ENCODE measurements at regions of chr22 and their contacts with region 1.

Region 1: GRCh38 chr22:40922484-40923303 is 28.5 kb upstream of the RBX1 start:
- DNase-seq: peak in 1 of 2 donors; percentile 32
- ATAC-seq: peak in 7 of 8 donors; percentile 41 to 84 (median 70)
- H3K4me3 ChIP-seq: peak overlapping the region in 1 of 10 donors; percentile 11
- H3K27ac ChIP-seq: no peak overlapping the region
- H3K4me1 ChIP-seq: peaks cover 0 to 6% (median 0%) of the 10 kb centered on the region in 9 donors
- H3K27me3 ChIP-seq: no peaks in the 10 kb centered on the region
- CTCF ChIP-seq: peak; percentile 63 to 85 (median 79)

Region 2: GRCh38 chr22:41117127-41117965 is 194.7 kb after region 1 on chr22:
- intact Hi-C with region 1: loop called in 2 of 10 experiments (anchors 10 kb)
- DNase-seq: no peak
- ATAC-seq: peak in 1 of 8 donors; percentile 24
- H3K4me3 ChIP-seq: no peak overlapping the region
- H3K27ac ChIP-seq: no peak overlapping the region
- H3K4me1 ChIP-seq: peaks cover 0 to 40% (median 11%) of the 10 kb centered on the region in 9 donors
- H3K27me3 ChIP-seq: no peaks in the 10 kb centered on the region
- CTCF ChIP-seq: no peak

Region 3: GRCh38 chr22:41140365-41140957 is 217.8 kb after region 1 on chr22:
- intact Hi-C with region 1: loop called in 3 of 10 experiments (anchors 5 to 10 kb)
- DNase-seq: peak in 1 of 2 donors; percentile 13
- ATAC-seq: peak in 5 of 8 donors; percentile 29 to 67 (median 61)
- H3K4me3 ChIP-seq: no peak overlapping the region
- H3K27ac ChIP-seq: peak overlapping the region in 2 of 10 donors; percentile 7 to 23
- H3K4me1 ChIP-seq: peaks cover 0 to 19% (median 12%) of the 10 kb centered on the region in 9 donors
- H3K27me3 ChIP-seq: no peaks in the 10 kb centered on the region
- CTCF ChIP-seq: no peak

Region 4: GRCh38 chr22:41152902-41153301 is 230.2 kb after region 1 on chr22:
- intact Hi-C with region 1: loop called in 5 of 10 experiments (anchors 5 to 10 kb)
- DNase-seq: no peak
- ATAC-seq: no peak
- H3K4me3 ChIP-seq: no peak overlapping the region
- H3K27ac ChIP-seq: no peak overlapping the region
- H3K4me1 ChIP-seq: peaks cover 0 to 10% (median 0%) of the 10 kb centered on the region in 9 donors
- H3K27me3 ChIP-seq: no peaks in the 10 kb centered on the region
- CTCF ChIP-seq: no peak

Region 5: DNA sequence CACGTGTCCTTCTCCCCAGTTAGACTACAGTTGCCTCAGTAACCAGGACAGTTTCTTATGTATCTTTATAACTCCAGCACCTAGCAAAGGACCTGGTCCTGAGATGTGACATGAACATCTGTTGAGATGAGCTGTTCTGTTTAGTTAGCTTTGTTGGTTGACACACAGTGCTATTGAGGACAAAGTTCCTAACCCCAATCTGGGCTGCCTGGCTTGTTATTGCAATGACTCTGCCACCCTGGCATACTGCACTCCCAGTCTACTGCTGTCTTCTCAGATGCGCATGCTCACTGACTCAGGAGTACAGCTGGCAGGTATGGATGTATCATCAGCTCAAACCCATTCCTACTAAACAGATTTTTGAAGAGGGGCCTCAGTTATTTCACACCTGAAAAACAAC is 690.8 kb after region 1 on chr22:
- intact Hi-C with region 1: loop called in 1 of 10 experiments (anchors 5 kb)
- DNase-seq: no peak
- ATAC-seq: peak in 1 of 8 donors; percentile 35
- H3K4me3 ChIP-seq: no peak overlapping the region
- H3K27ac ChIP-seq: no peak overlapping the region
- H3K4me1 ChIP-seq: peaks cover 0 to 14% (median 2%) of the 10 kb centered on the region in 9 donors
- H3K27me3 ChIP-seq: no peaks in the 10 kb centered on the region
- CTCF ChIP-seq: no peak

Measured in heart right ventricle (tissue), 16 donors.